Psoas muscle (tissue), 8 donors: ENCODE measurements at regions of chr15 and their contacts with region 1.

Region 1: GRCh38 chr15:42137431-42138261 is 18.8 kb downstream of the PLA2G4F start:
- DNase-seq: no peak
- ATAC-seq: peak in 3 of 4 donors; percentile 36 to 58 (median 48)
- H3K4me3 ChIP-seq: no peak overlapping the region
- H3K27ac ChIP-seq: no peak overlapping the region
- H3K4me1 ChIP-seq: no peaks in the 10 kb centered on the region
- H3K27me3 ChIP-seq: no peaks in the 10 kb centered on the region
- CTCF ChIP-seq: peak; percentile 53

Region 2: DNA sequence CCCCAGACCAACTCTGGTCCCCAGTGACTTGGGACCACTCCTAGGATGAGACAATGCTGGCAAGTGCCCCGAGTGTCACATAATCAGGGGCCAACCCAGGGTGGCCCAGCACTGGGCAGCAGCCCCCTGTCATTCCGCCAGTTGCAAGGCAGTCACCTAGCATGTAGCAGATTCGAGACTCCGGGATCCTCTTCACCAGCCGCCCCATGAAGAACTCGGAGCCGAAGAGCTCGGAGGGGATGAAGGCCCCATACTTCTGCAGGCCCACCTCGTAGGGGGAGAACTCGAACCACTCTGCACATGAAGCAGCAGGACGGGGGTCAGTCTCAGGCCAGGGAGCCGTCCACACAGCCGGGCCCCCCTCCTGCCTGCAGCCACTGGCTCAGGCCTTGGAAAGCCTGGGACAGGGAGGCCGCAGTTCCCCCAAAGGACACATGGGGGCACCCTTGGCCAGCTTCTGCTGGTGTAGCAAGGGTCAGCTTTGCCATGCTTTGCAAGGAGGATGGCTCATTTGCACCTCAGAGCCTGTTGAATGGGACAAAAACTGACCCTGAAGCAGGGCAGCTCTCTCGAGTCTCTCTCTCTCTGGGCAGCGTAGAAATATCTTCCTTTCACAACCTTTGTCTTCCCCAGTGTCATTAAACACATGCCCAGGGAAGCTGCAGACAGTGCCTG is 148.2 kb before region 1 on chr15:
- intact Hi-C with region 1: loop called (anchors 2 to 10 kb)
- DNase-seq: peak; percentile 82 to 91
- ATAC-seq: peak; percentile 90 to 98 (median 96)
- H3K4me3 ChIP-seq: no peak overlapping the region
- H3K27ac ChIP-seq: no peak overlapping the region
- H3K4me1 ChIP-seq: no peaks in the 10 kb centered on the region
- H3K27me3 ChIP-seq: no peaks in the 10 kb centered on the region
- CTCF ChIP-seq: peak; percentile 99

Region 3: DNA sequence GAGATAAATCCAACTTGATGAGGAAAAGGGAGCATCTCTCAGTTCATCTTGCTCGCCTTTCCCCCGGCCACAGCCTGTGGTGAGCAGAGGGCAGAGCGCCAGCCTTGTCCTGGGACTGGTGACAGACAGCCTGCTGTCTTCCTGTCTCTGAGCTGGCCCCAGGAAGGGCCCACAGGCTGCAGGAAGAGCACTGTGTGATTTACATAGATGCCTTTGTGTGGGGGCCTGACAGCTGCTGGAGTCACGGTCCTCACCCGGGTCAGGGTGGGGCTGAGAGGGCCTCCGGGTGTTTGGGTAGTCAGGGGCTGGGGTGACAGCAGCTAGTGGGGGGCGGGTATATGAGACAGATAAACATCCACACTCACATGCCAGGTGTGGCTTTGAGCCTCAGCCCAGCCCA is 72.6 kb before region 1 on chr15:
- intact Hi-C with region 1: loop called (anchors 2 to 5 kb)
- DNase-seq: no peak
- ATAC-seq: peak in 1 of 4 donors; percentile 8
- H3K4me3 ChIP-seq: no peak overlapping the region
- H3K27ac ChIP-seq: no peak overlapping the region
- H3K4me1 ChIP-seq: no peaks in the 10 kb centered on the region
- H3K27me3 ChIP-seq: no peaks in the 10 kb centered on the region
- CTCF ChIP-seq: no peak